ENCODE measurements at regions of chr9 and their contacts with region 1.

Region 1: GRCh38 chr9:112050544-112051475 is 124.3 kb downstream of the SUSD1 start:
- DNase-seq: no peak

Region 2: DNA sequence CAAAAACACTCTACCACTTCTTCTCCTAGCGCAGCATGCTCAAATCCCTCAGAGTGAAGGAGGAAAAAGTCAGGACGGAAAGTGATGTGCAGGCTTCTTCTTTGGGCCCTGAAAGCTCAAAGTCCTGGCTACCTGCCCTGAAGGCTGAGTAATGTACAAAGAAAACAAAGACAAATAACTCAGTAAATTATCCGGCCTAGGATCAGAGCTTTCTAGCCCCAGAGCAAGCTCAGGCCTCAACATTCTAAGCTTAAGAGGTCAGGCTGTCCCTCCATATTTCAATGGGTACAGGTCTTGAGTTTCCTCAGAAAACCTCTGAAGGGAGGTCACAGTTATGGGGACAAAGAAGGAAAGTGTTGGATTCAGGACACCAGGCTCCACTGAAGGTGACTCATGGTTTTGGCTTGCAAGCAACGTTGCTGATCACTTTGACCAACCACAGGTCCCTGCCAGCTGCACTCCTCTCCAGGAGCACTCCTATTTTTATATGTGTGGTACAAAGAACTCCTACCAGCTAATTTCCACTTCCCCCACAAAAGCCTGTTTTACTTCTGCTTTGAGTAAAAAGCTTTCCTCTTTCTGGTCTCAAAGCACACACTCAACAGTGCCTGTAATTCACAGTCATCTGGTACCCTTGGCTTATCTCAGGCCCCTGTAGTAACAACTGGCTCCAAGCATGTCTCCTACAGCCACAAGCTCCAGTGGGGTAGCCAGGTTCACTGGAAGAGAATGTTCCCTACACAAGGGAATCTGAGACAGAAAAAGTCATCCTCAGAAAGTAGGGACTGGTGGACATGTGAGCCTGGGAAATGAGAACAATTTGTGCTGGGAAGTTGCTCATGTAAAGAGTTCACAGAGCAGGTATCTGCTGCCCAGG is 38.5 kb before region 1 on chr9:
- intact Hi-C with region 1: loop called (anchors 5 kb)
- DNase-seq: no peak